Adrenal gland (tissue), 19 donors: ENCODE measurements at regions of chr19 and their contacts with region 1.

Region 1: GRCh38 chr19:14786421-14786851 is 8.1 kb upstream of the ADGRE2 start:
- DNase-seq: peak in 6 of 7 donors; percentile 35 to 57 (median 42)
- H3K4me3 ChIP-seq: peak overlapping the region in 1 of 4 donors; percentile 30
- H3K27ac ChIP-seq: peak overlapping the region in 1 of 5 donors; percentile 70
- H3K4me1 ChIP-seq: peaks cover 0 to 7% of the 10 kb centered on the region in 2 donors
- H3K27me3 ChIP-seq: no peaks in the 10 kb centered on the region
- CTCF ChIP-seq: peak; percentile 75 to 88 (median 82)
- POLR2A ChIP-seq: no peak

Region 2: DNA sequence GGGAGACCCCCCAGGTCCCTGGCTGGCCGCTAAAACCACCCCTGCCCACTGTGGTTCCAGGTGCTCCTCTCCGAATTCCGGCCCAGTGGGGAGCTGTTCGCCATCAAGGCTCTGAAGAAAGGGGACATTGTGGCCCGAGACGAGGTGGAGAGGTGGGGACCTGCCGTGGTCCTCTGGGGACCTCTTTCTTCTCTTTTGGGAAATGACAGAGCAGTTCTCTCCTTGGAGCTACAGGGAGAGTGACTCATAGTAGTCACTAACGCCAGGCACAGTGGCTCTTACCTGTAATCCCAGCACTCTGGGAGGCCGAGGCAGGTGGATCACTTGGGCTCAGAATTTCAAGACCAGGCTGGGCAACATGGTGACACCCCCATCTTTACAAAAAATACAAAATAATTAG is 318.6 kb before region 1 on chr19:
- intact Hi-C with region 1: no loop called
- DNase-seq: no peak
- H3K4me3 ChIP-seq: no peak overlapping the region
- H3K27ac ChIP-seq: no peak overlapping the region
- H3K4me1 ChIP-seq: peaks cover 0 to 6% of the 10 kb centered on the region in 2 donors
- H3K27me3 ChIP-seq: no peaks in the 10 kb centered on the region
- CTCF ChIP-seq: no peak
- POLR2A ChIP-seq: no peak

Region 3: DNA sequence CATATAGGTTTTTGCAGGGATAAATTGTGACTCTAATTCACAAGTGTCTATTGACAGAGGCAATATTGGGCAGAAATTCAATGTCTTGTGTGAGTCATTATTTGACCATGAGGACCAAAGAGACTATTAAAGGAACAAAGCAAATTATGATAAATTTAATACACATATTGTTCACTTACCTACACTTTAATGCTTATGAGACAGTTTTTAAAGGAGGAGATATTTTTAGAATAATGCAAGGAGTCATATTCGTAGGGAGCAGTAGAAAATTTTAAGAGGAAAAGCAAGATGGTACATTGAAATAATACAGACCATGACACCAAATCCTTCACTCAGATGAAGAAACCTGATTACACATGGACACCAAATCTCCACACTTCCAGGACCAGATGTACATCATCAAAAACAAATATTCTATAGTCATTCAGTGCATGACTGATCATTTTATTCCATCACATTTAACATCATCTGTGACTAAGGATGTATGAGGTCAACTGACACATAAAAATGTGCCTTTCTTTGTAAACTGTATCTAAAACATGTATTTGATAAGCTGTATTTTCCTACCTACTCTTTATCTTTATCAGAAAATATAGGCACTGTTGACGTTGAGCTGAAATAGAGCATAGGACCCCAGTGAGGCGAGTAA is 103.7 kb after region 1 on chr19:
- intact Hi-C with region 1: loop called in 1 of 2 experiments (anchors 5 kb)
- DNase-seq: no peak
- H3K4me3 ChIP-seq: no peak overlapping the region
- H3K27ac ChIP-seq: peak overlapping the region; percentile 13 to 84 (median 55)
- H3K4me1 ChIP-seq: peaks cover 20 to 35% of the 10 kb centered on the region in 2 donors
- H3K27me3 ChIP-seq: no peaks in the 10 kb centered on the region
- CTCF ChIP-seq: no peak
- POLR2A ChIP-seq: no peak